Thyroid gland (tissue), 4 donors: ENCODE measurements at regions of chr1 and their contacts with region 1.

Region 1: GRCh38 chr1:2044510-2045319 is 5.5 kb upstream of the PRKCZ start:
- DNase-seq: peak; percentile 66 to 71
- H3K4me3 ChIP-seq: peak overlapping the region in 1 of 3 donors; percentile 8
- H3K27ac ChIP-seq: no peak overlapping the region
- H3K4me1 ChIP-seq: peaks cover 8 to 17% of the 10 kb centered on the region in 2 donors
- H3K27me3 ChIP-seq: no peaks in the 10 kb centered on the region
- CTCF ChIP-seq: peak; percentile 36 to 99 (median 89)
- POLR2A ChIP-seq: no peak

Region 2: GRCh38 chr1:1946540-1946939 is 98.2 kb before region 1 on chr1:
- intact Hi-C with region 1: loop called (anchors 5 kb)
- DNase-seq: peak; percentile 45 to 61
- H3K4me3 ChIP-seq: no peak overlapping the region
- H3K27ac ChIP-seq: no peak overlapping the region
- H3K4me1 ChIP-seq: peaks cover 10 to 22% of the 10 kb centered on the region in 2 donors
- H3K27me3 ChIP-seq: no peaks in the 10 kb centered on the region
- CTCF ChIP-seq: no peak
- POLR2A ChIP-seq: no peak

Region 3: GRCh38 chr1:1959840-1960479 is 84.8 kb before region 1 on chr1:
- intact Hi-C with region 1: loop called (anchors 5 kb)
- DNase-seq: peak; percentile 87 to 89
- H3K4me3 ChIP-seq: no peak overlapping the region
- H3K27ac ChIP-seq: no peak overlapping the region
- H3K4me1 ChIP-seq: peaks cover 0 to 10% of the 10 kb centered on the region in 2 donors
- H3K27me3 ChIP-seq: no peaks in the 10 kb centered on the region
- CTCF ChIP-seq: peak; percentile 51 to 88 (median 70)
- POLR2A ChIP-seq: no peak